Activated CD4-positive, alpha-beta T cell treated with anti-CD3 and anti-CD28 coated beads for 36 hours (primary cell): ENCODE measurements at regions of chr1 and their contacts with region 1.

Region 1: DNA sequence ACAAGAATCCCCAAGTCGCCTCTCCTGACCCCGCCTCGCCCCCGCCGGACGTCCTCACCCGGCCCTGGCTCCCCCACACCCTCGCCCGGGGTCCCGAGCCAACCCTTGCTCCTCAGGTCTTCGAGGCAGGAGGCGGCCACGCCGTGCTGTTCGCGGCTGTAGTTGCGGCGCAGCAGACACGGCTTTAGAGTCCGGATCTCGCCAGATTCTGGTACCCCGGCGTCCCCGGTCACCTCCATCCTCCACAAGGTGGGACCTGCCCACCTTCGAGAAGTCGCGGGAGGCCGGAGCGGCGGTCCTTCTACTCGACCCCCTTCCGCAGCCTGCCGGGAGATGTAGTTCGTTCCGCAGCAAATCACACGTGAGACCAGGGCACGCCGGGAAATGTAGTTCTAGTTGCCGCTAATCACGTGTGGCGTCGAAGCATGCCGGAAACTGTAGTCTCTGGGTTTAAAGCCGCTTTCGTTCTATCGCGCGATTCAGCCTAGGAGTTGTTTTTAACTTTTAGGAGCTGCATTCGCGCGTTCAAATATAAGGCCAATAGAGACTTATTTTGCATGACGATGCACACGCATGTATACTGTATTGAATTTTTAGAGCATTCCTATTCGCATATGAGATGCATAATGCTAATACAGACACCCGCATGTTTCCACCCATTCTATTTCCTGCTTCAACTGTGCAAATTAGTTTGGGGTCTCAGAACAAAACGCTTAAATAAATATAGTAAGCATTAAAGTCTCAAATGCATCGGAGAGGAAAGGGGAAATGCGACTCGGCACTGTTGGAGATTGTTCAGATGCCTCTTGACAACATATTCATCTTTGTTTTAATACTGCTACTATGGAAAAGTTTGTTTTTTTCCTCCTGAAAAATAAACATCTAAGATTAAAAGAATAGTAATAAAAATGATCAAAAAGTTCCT is at the start of gene DFFA:
- DNase-seq: peak; percentile 96
- ATAC-seq: peak; percentile 83
- H3K4me3 Mint-ChIP-seq: peak within 1 kb of the TSS; percentile 97
- H3K27ac Mint-ChIP-seq: peak within 1 kb of the TSS; percentile 92
- H3K4me1 Mint-ChIP-seq: peaks cover 38% of the 10 kb centered on the region
- H3K27me3 Mint-ChIP-seq: no peaks in the 10 kb centered on the region
- total RNA-seq, gene DFFA: 45.7 to 46.4 TPM

Region 2: DNA sequence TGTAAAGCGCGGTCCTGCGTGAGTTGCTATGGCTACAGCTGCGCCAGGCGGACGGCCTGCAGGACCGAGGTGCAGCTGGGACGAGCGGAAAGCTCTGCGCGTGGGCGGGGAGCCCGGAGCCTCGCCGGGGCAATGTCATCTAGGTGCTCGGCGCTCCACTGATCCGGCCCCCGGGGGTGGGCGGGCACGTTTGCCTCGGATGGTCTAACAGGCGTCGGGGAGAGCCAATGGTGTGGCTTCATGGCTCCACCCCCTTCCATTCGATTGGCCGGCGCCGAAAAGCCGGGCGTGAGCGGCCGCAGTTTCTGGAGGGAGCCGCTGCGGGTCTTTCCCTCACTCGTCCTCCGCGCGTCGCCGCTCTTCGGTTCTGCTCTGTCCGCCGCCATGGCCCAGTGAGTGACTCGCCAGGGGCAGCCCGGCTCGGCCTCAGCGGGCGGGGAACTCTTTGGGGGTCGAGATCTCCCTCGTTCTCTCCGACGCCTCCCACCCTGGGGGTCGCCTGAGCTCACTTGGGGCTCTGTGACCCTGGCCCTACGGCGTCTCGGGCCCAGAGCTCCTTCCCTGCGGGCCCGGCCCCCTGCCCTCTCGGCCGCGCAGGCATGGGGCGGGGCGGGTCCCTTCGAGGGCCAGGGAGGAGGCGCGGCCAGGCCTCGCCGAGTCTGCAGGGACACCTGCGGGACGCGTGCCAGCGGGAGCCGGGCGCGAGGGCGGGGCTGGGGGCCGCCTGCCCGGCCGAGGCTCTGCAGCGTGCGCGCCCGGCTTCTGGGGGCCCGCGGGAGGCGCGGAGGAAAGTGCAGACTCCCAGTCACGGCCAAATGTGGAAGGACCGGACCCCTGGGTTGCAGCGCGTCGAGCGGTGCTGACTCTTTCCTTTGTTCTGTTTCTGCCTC is 73.5 kb before region 1 on chr1 and contains the start of gene PGD:
- CTCF ChIA-PET with region 1: no interaction called
- POLR2A ChIA-PET with region 1: no interaction called
- intact Hi-C with region 1: loop called (anchors 1 to 10 kb)
- DNase-seq: peak; percentile 99
- ATAC-seq: peak; percentile 97
- H3K4me3 Mint-ChIP-seq: peak within 1 kb of the TSS; percentile 86
- H3K27ac Mint-ChIP-seq: peak within 1 kb of the TSS; percentile 78
- H3K4me1 Mint-ChIP-seq: peaks cover 31% of the 10 kb centered on the region
- H3K27me3 Mint-ChIP-seq: no peaks in the 10 kb centered on the region
- total RNA-seq, gene PGD: 91.6 to 93.7 TPM